HEK293T (cell line): ENCODE measurements at regions of chr3 and their contacts with region 1.

Region 1: GRCh38 chr3:10738688-10739372 is 77.2 kb upstream of the SLC6A11 start:
- DNase-seq: peak; percentile 75

Region 2: DNA sequence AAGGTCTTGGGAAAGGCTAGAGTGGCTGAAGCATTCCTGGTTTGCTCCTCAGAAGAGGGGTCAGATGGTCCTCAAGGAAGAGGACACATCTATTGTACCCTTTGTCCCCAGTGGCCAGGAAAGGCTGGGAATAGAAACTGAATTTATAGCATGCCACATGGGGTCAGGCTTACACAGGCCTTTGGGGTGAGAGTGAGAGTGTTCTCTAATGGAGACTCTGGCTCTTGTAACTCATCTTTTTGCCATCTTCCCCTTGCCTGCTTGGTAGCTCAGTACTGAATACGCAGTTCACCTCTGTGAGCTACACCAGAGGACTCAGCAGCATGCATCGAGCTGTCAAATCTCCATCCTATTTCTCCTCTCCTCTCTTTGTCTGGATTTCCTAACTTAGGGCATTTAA is 321.0 kb before region 1 on chr3:
- CTCF ChIA-PET with region 1: interaction called, 11 read pairs
- POLR2A ChIA-PET with region 1: no interaction called
- DNase-seq: no peak